Sigmoid colon (tissue), 7 donors: ENCODE measurements at regions of chr12 and their contacts with region 1.

Region 1: DNA sequence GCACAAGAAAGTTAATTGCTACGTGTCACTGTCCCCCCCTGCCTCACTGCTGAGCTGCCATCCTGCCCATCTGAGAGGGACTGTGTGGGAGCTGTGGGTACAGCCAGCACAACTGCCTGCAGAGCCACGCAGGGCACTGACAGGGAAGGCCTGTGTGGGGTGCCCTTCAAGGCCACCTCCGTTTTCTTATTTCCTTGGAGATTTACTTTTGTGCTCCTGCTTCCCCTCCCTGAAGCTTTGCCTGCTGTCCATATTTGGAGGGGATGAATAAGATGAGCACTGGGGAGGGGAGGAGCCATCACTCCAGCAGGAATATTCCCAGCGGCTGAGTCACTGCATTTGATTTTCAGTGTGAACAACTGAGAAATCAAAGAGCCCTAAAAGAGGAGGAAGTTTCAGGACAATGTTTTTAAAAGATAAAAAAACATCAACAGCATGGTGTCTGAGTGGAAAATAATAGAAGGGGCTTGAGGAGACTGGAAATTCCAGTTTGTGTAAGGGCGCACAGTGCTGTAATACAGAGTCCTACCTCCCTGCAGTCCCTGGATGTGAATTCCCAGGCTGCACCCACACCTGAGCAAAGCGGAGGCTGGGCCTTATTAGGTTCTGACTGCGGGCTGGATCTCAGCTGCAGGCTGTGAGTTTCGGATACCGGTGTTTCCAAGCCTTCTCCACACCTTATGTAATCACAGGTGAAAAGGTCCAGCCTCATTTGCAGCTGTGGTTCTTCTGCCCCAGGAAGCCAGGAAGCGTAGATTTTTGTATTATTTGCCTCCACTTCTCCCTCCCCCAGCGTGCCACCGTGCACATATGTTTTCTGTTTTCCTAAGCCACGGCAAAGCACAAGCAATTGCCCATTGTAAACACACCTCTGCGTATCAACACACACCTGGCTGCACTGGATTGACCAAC is 192.6 kb upstream of the BCL2L14 start:
- DNase-seq: peak; percentile 81
- H3K4me3 ChIP-seq: peak overlapping the region in 1 of 4 donors; percentile 5
- H3K27ac ChIP-seq: peak overlapping the region; percentile 72 to 88 (median 76)
- H3K4me1 ChIP-seq: peaks cover 0 to 71% (median 54%) of the 10 kb centered on the region in 4 donors
- H3K27me3 ChIP-seq: no peaks in the 10 kb centered on the region
- CTCF ChIP-seq: no peak
- EP300 ChIP-seq: no peak
- POLR2A ChIP-seq: no peak

Region 2: GRCh38 chr12:11705010-11705409 is 173.1 kb before region 1 on chr12:
- intact Hi-C with region 1: loop called (anchors 5 kb)
- DNase-seq: peak; percentile 82
- H3K4me3 ChIP-seq: no peak overlapping the region
- H3K27ac ChIP-seq: peak overlapping the region; percentile 62 to 90 (median 82)
- H3K4me1 ChIP-seq: peaks cover 0 to 95% (median 73%) of the 10 kb centered on the region in 4 donors
- H3K27me3 ChIP-seq: no peaks in the 10 kb centered on the region
- CTCF ChIP-seq: no peak
- EP300 ChIP-seq: peak; percentile 31 to 92 (median 82)
- POLR2A ChIP-seq: no peak

Region 3: DNA sequence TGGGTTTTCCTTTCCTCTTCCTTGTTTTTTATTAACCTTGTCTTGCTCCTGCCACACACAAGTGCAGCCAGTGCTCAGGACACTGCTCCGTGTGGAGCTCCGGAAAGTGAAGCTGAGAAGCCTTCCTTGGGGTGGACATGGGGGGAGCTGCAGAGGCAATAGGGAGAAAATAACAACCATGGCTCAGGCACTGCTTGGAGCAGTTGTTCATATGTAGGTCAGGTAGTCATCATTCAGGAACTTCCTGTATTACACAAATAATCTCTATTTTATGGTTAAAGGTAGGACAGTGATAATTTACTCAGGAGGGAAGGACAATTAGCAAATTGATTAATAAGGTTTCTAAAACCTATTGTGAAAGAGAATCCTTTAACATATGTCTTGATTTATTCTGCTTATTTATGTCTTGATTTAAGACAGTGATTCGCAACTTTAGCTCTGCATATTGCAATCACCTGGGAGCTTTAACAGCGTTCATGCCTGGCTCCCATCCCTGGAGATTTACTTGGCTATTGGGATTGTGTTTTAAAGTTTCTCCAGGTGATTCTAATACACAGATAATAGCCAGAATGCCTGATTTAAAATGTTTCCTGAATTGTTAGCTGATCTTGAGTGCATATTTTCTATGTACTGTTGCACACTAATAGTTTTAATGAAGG is 136.6 kb before region 1 on chr12:
- intact Hi-C with region 1: no loop called
- DNase-seq: no peak
- H3K4me3 ChIP-seq: no peak overlapping the region
- H3K27ac ChIP-seq: peak overlapping the region in 2 of 4 donors; percentile 2 to 9
- H3K4me1 ChIP-seq: peaks cover 0 to 60% (median 47%) of the 10 kb centered on the region in 4 donors
- H3K27me3 ChIP-seq: no peaks in the 10 kb centered on the region
- CTCF ChIP-seq: no peak
- EP300 ChIP-seq: no peak
- POLR2A ChIP-seq: no peak